ENCODE measurements at regions of chr3 and their contacts with region 1.

Region 1: DNA sequence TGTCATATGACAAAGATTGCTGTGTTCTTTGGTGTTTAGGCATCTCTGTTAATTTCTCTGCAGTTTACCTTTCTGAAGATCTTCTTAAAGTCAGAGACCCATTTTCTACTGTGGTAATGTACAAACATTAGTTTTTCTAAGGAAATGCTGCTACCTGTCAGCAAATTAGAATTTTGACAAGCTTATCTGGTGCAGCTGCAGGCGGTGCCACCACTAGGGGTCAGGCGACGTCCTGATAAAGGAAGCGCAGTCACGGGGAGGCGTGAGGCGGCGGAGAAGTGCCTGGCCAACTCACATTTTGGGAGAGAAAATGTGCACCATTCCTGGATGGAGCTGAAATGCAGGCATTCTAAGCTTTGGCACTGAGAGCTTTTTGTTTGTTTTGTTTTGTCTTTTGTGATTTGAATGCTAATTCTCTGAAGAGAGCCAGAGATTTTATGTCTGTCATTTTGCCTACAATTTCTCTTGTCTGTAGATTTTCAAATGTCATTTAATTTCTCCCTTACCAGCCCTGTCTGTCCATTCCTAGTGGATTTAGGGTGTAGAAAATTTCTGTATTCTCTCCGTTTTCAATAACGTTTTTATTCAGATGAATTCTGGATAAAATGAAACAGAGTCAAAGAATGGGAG is 24.9 kb upstream of the SIAH2 start:
- DNase-seq: peak; percentile 76 to 94 (median 88)

Region 2: GRCh38 chr3:150421799-150422548 is 365.9 kb before region 1 on chr3:
- intact Hi-C with region 1: no loop called
- DNase-seq: no peak

Region 3: GRCh38 chr3:150840802-150841515 is 53.1 kb after region 1 on chr3:
- intact Hi-C with region 1: no loop called
- DNase-seq: no peak

Region 4: DNA sequence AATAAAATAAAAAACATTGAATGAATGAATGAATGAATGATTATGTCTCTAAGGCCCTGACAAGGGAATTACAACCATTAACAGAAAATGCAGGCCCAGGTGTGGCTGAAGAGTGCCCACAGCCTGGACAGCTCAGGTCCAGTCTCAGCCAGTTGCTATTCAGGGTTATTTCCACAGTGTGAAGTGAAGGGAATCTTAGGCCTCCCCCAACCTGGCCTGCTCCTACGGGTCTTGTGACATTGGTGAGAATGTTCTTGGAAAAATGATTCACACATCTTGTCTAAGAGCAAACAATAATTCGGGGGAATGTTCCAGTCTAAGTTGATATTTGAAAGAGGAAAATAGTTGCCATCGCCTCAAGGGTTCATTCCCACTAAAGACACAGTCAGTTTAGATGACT is 80.4 kb after region 1 on chr3:
- intact Hi-C with region 1: loop called (anchors 10 kb)
- DNase-seq: no peak

Region 5: DNA sequence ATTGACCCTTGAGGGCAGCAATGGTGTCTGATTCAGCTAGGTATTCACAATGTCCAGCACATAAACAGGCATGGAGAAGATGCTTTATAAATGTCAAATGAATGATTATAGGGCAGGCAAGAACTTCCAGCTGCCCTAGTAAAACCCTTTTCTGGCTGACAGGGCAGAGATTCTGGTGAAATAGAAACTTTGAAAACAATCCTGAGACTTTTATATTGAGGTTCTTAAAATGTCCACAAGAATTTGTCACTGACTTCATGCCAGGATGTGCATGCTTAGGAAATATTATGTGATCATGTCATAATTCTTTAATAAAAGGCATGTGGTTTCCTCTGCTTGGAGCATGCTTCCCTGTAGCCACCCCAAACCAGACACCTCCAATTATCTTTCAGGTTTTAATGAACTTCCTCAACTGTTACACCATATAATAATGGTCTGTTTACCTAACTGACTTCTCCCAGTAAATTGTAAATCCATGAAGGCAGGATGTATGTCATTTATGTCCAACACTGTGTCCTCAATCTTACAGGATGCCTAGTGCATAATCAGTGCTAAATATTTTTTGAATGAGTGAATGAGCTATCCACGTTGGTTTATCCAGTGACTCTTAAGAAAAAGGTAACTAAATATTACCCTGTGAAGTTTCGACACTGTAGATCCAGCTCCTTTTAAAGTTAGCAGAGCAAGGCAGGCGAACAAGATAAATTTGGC is 228.1 kb after region 1 on chr3:
- intact Hi-C with region 1: no loop called
- DNase-seq: peak in 6 of 42 donors; percentile 7 to 48 (median 20)

Region 6: DNA sequence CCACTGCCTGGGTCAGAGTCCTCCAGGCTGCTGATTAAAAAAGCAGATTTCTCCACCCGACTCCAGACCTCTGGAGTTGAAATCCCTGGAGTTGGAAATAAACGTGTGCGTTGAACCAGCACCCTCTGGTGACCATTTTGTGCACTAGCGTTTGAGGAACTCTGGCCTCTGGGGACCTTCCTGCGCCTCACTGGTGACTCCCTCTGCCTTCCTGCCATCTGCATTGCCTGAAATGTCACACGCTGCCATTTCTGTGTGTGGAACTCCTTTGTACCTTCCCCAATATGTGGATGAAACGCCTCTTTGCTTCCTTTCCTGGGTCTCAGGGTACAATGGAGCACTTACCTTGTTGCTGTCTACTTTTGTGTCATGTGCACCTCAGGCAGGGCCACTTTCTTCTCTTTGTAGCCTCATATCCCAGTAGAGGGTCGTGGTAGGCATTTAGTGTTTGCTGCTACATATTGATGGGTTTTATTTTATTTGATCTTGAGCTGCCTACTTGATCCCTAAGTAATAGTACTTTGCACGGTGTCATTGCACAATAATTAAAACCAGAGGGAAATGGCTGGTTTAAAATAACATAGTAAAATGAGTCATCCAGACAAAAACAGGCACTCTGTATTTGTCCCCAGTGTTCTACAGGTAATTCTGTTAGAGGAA is 358.3 kb after region 1 on chr3:
- intact Hi-C with region 1: loop called (anchors 5 kb)
- DNase-seq: peak; percentile 55 to 91 (median 78)

Region 7: GRCh38 chr3:151584566-151584965 is 796.7 kb after region 1 on chr3:
- intact Hi-C with region 1: no loop called
- DNase-seq: no peak

Measured in head of caudate nucleus (tissue), 42 donors.